SK-N-SH (cell line): ENCODE measurements at regions of chr10 and their contacts with region 1.

Region 1: DNA sequence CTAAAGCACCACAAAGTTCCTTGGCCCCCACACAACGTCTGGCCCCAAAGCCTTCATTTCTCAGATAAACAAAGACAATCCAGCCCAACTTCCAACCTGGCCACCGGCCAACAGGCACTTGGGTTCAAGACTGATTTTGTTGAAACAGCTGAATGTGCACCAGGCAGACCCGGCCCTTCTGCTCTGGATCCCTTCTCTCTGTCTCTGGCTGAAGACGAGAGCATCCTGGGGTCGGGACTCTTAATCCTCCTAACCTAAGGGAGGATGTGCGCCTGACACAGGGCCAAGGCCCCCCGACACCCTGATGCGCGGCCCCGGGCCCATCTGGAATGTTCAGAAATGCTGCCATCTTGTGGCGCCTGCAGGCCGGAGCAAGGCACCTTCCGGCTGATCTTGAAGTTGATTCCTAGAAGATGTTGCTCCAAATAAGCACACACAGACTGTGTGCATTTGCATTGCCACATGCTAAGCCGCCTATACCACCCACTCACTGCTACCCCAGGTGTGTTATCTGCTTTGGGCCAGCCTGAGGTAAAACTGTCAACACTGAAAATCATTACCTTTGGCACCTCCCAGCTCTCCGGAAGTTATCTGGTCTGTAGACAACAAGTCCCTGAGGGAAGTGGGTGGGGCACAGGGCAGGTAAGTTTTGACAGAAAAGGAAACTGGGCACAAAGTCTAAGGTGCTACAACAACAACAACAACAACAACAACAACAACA is 98.4 kb upstream of the HABP2 start:
- DNase-seq: peak; percentile 69
- H3K4me3 ChIP-seq: peak overlapping the region in 1 of 2 experiments; percentile 22; a peak in 2 of 4 replicates
- H3K27ac ChIP-seq: no peak overlapping the region
- H3K4me1 ChIP-seq: peaks cover 0 to 6% of the 10 kb centered on the region in 2 experiments; a peak in 1 of 4 replicates
- H3K27me3 ChIP-seq: no peaks in the 10 kb centered on the region
- CTCF ChIP-seq: peak; percentile 75
- EP300 ChIP-seq: no peak
- RAD21 ChIP-seq: peak; percentile 66

Region 2: DNA sequence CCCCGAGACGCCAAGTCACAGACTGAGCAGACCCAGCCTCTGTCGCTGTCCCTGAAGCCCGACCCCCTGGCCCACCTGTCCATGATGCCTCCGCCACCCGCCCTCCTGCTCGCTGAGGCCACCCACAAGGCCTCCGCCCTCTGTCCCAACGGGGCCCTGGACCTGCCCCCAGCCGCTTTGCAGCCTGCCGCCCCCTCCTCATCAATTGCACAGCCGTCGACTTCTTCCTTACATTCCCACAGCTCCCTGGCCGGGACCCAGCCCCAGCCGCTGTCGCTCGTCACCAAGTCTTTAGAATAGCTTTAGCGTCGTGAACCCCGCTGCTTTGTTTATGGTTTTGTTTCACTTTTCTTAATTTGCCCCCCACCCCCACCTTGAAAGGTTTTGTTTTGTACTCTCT is 288.8 kb before region 1 on chr10:
- CTCF ChIA-PET with region 1: no interaction called
- POLR2A ChIA-PET with region 1: no interaction called
- DNase-seq: no peak
- H3K4me3 ChIP-seq: no peak overlapping the region
- H3K27ac ChIP-seq: no peak overlapping the region
- H3K4me1 ChIP-seq: peaks cover 0 to 16% of the 10 kb centered on the region in 2 experiments; a peak in 2 of 4 replicates
- H3K27me3 ChIP-seq: no peaks in the 10 kb centered on the region
- CTCF ChIP-seq: no peak
- EP300 ChIP-seq: no peak
- RAD21 ChIP-seq: no peak

Region 3: DNA sequence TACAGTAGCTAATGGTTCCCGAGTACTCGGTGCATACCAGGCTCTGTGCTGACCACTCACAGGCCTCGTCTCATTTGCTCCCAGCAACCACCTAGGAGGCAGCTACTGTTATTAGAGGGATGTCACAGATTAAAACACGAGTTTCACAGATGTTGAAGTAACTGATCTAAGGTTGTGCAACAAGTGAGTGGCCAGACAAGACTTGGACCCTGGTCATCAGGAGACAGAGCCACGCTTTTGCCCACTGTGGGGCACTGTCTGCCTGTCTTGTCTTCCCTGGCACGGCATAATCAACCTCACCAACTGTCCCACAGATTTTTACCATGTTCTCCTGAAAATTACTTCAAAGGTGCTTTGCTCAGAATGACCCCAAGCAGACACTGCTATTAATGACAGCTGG is 13.3 kb before region 1 on chr10:
- CTCF ChIA-PET with region 1: interaction called, 26 read pairs
- POLR2A ChIA-PET with region 1: no interaction called
- DNase-seq: no peak
- H3K4me3 ChIP-seq: no peak overlapping the region
- H3K27ac ChIP-seq: no peak overlapping the region
- H3K4me1 ChIP-seq: no peaks in the 10 kb centered on the region
- H3K27me3 ChIP-seq: no peaks in the 10 kb centered on the region
- CTCF ChIP-seq: peak; percentile 40
- EP300 ChIP-seq: no peak
- RAD21 ChIP-seq: peak; percentile 44